Activated CD4-positive, alpha-beta T cell treated with anti-CD3 and anti-CD28 coated beads for 36 hours (primary cell): ENCODE measurements at regions of chr15 and their contacts with region 1.

Region 1: GRCh38 chr15:40405501-40406381 is at the start of gene IVD:
- DNase-seq: peak; percentile 95
- ATAC-seq: peak; percentile 97
- H3K4me3 Mint-ChIP-seq: peak within 1 kb of the TSS; percentile 78
- H3K27ac Mint-ChIP-seq: peak within 1 kb of the TSS; percentile 95
- H3K4me1 Mint-ChIP-seq: peaks cover 52% of the 10 kb centered on the region
- H3K27me3 Mint-ChIP-seq: no peaks in the 10 kb centered on the region
- total RNA-seq, gene IVD: 30.8 to 46.2 TPM

Region 2: GRCh38 chr15:39934397-39935071 is 471.2 kb before region 1 on chr15:
- CTCF ChIA-PET with region 1: no interaction called
- POLR2A ChIA-PET with region 1: no interaction called
- intact Hi-C with region 1: loop called in 1 of 2 experiments (anchors 10 kb)
- DNase-seq: peak; percentile 24
- ATAC-seq: no peak
- H3K4me3 Mint-ChIP-seq: peak overlapping the region; percentile 95
- H3K27ac Mint-ChIP-seq: peak overlapping the region; percentile 83
- H3K4me1 Mint-ChIP-seq: peaks cover 41% of the 10 kb centered on the region
- H3K27me3 Mint-ChIP-seq: no peaks in the 10 kb centered on the region

Region 3: GRCh38 chr15:40197434-40197833 is 208.3 kb before region 1 on chr15:
- CTCF ChIA-PET with region 1: no interaction called
- POLR2A ChIA-PET with region 1: no interaction called
- intact Hi-C with region 1: no loop called
- DNase-seq: no peak
- ATAC-seq: no peak
- H3K4me3 Mint-ChIP-seq: no peak overlapping the region
- H3K27ac Mint-ChIP-seq: no peak overlapping the region
- H3K4me1 Mint-ChIP-seq: peaks cover 29% of the 10 kb centered on the region
- H3K27me3 Mint-ChIP-seq: no peaks in the 10 kb centered on the region

Region 4: GRCh38 chr15:40357723-40358470 is 47.8 kb before region 1 on chr15 and contains the start of gene DISP2:
- CTCF ChIA-PET with region 1: no interaction called
- POLR2A ChIA-PET with region 1: no interaction called
- intact Hi-C with region 1: loop called in 1 of 2 experiments (anchors 1 kb)
- DNase-seq: peak; percentile 93
- ATAC-seq: peak; percentile 94
- H3K4me3 Mint-ChIP-seq: peak within 1 kb of the TSS; percentile 67
- H3K27ac Mint-ChIP-seq: peak within 1 kb of the TSS; percentile 20
- H3K4me1 Mint-ChIP-seq: peaks cover 3% of the 10 kb centered on the region
- H3K27me3 Mint-ChIP-seq: peaks cover 7% of the 10 kb centered on the region
- total RNA-seq, gene DISP2: 0.02 to 0.04 TPM

Region 5: GRCh38 chr15:40382580-40383456 is 22.9 kb before region 1 on chr15 and contains the start of gene KNSTRN:
- CTCF ChIA-PET with region 1: interaction called, 5 read pairs
- POLR2A ChIA-PET with region 1: interaction called, 4 read pairs
- intact Hi-C with region 1: loop called in 1 of 2 experiments (anchors 1 kb)
- DNase-seq: peak; percentile 97
- ATAC-seq: peak; percentile 100
- H3K4me3 Mint-ChIP-seq: peak within 1 kb of the TSS; percentile 93
- H3K27ac Mint-ChIP-seq: peak within 1 kb of the TSS; percentile 78
- H3K4me1 Mint-ChIP-seq: peaks cover 22% of the 10 kb centered on the region
- H3K27me3 Mint-ChIP-seq: no peaks in the 10 kb centered on the region
- total RNA-seq, gene KNSTRN: 56.2 to 58.8 TPM

Region 6: DNA sequence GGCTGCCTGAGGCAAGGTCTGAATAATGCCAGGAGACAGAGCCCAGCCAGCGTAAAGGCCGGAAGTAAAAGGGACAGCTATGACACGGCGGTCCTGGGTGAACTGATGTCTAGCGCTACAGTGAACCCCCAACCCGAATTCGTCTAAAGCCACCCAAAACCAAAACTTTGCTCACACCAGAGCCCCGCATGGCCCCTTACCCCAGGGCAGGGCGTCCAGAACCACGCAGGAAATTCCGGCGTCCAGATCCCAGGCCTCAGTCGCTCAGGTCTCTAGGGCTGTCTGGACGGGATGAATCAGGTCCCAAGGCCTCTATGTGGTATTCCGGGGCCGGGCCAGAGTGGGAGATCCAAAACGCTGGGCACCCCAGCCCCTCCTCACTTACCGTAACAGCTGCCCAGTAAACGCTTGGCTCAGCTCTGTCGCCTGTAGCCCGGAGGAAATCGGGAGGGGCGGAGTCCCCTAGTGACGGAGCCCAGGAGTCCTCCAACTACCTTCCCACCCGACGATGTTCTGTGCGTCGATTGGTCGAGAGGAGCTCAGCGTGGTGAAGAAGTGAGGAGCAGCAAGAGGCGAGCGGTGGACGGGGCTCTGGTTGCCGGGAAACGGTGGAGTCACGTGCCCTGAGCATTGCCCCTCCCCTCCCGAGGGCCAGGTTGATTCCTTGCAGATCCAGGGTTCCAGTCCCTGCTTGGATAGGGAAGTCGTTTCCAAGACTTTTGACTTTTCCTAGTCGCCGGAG is 159.0 kb after region 1 on chr15 and contains the start of gene CCDC32:
- CTCF ChIA-PET with region 1: no interaction called
- POLR2A ChIA-PET with region 1: no interaction called
- intact Hi-C with region 1: loop called in 1 of 2 experiments (anchors 1 kb)
- DNase-seq: peak; percentile 97
- ATAC-seq: peak; percentile 97
- H3K4me3 Mint-ChIP-seq: peak within 1 kb of the TSS; percentile 96
- H3K27ac Mint-ChIP-seq: peak within 1 kb of the TSS; percentile 93
- H3K4me1 Mint-ChIP-seq: peaks cover 44% of the 10 kb centered on the region
- H3K27me3 Mint-ChIP-seq: no peaks in the 10 kb centered on the region
- total RNA-seq, gene CCDC32: 14.2 to 24.5 TPM

Region 7: GRCh38 chr15:40694688-40695468 is 289.1 kb after region 1 on chr15 and contains the start of gene RAD51:
- CTCF ChIA-PET with region 1: no interaction called
- POLR2A ChIA-PET with region 1: no interaction called
- intact Hi-C with region 1: no loop called
- DNase-seq: peak; percentile 96
- ATAC-seq: peak; percentile 93
- H3K4me3 Mint-ChIP-seq: peak within 1 kb of the TSS; percentile 95
- H3K27ac Mint-ChIP-seq: peak within 1 kb of the TSS; percentile 98
- H3K4me1 Mint-ChIP-seq: peaks cover 20% of the 10 kb centered on the region
- H3K27me3 Mint-ChIP-seq: no peaks in the 10 kb centered on the region
- total RNA-seq, gene RAD51: 73.5 to 75.3 TPM